Colonic mucosa (tissue), 4 donors: ENCODE measurements at regions of chr9 and their contacts with region 1.

Region 1: GRCh38 chr9:21812946-21813568 is 10.6 kb downstream of the MTAP start:
- DNase-seq: peak; percentile 80
- H3K4me3 ChIP-seq: no peak overlapping the region
- H3K27ac ChIP-seq: no peak overlapping the region
- H3K4me1 ChIP-seq: no peaks in the 10 kb centered on the region
- H3K27me3 ChIP-seq: no peaks in the 10 kb centered on the region
- CTCF ChIP-seq: peak; percentile 86

Region 2: GRCh38 chr9:21267485-21268346 is 545.3 kb before region 1 on chr9:
- intact Hi-C with region 1: no loop called
- DNase-seq: no peak
- H3K4me3 ChIP-seq: no peak overlapping the region
- H3K27ac ChIP-seq: no peak overlapping the region
- H3K4me1 ChIP-seq: no peaks in the 10 kb centered on the region
- H3K27me3 ChIP-seq: no peaks in the 10 kb centered on the region
- CTCF ChIP-seq: no peak

Region 3: DNA sequence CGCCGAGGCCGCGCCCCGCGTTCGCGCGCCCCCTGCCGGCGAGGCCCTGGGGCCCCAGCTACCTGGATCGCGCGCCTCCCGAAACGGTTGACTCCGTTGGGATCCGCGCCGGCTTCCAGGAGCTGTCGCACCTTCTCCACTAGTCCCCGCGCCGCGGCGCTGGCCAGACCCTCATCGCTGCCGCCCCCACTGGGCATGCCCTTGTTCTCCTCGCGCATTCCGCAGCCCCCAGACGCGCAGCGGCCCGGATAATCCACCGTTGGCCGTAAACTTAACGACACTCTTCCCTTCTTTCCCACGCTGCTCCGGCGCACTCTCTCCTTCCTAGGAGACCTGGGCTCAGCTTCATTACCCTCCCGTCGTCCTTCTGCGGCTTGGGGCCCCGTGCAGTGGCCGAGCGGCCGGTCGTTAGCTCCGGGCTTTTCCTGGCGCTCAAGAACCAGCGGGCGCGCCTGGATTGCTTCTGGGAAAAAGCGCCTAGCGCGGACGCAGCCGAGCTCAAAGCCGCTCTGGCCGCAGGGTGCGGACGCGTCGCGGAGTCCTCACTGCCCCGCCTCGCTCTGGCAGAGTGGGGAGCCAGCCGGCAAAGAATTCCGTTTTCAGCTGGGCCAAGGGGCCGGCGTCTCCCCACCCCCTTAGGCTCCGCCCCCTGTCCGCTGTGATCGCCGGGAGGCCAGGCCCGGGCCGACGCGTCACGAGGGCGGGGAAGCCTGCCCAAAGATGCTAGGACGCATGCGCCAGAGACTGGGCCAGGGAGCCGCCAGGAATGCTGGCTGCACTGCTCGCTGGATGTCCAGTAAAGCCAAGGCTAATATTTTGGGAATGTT is 195.9 kb after region 1 on chr9 and contains the start of gene CDKN2B:
- intact Hi-C with region 1: loop called (anchors 10 kb)
- DNase-seq: peak; percentile 98
- H3K4me3 ChIP-seq: peak within 1 kb of the TSS; percentile 57
- H3K27ac ChIP-seq: peak within 1 kb of the TSS; percentile 88
- H3K4me1 ChIP-seq: no peaks in the 10 kb centered on the region
- H3K27me3 ChIP-seq: peaks cover 18% of the 10 kb centered on the region
- CTCF ChIP-seq: peak; percentile 98
- total RNA-seq, gene CDKN2B: 57.0 to 76.6 TPM

Region 4: DNA sequence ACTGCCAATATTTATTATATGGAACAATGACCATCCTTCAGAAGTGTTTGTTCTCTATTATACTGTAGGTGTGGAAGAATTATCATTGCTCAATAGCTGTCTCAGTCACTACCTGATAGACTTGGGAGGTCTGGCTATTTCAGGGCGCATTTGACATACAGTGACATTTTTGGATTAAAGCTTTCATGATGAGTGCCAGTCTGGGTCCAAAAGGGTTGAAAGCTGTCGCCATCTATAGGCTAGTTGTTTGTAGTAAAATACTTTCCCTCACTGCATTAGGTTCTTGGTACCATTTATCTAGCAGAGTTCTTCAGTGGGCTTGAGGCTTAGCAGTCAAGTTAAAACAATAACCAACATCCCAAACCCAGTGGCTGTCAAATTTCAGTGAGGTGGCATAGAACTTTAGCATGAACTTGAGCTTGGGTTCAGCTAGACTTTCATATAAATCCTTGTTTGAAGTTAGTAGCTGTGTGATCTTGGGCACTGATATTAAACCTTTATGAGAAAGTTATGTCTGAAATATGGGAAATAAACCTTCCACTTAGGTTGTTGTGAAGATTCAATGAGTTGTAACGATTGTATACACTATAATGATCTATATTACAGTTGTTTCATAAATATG is 306.6 kb after region 1 on chr9:
- intact Hi-C with region 1: loop called (anchors 5 kb)
- DNase-seq: no peak
- H3K4me3 ChIP-seq: no peak overlapping the region
- H3K27ac ChIP-seq: peak overlapping the region; percentile 71
- H3K4me1 ChIP-seq: no peaks in the 10 kb centered on the region
- H3K27me3 ChIP-seq: no peaks in the 10 kb centered on the region
- CTCF ChIP-seq: peak; percentile 51

Region 5: DNA sequence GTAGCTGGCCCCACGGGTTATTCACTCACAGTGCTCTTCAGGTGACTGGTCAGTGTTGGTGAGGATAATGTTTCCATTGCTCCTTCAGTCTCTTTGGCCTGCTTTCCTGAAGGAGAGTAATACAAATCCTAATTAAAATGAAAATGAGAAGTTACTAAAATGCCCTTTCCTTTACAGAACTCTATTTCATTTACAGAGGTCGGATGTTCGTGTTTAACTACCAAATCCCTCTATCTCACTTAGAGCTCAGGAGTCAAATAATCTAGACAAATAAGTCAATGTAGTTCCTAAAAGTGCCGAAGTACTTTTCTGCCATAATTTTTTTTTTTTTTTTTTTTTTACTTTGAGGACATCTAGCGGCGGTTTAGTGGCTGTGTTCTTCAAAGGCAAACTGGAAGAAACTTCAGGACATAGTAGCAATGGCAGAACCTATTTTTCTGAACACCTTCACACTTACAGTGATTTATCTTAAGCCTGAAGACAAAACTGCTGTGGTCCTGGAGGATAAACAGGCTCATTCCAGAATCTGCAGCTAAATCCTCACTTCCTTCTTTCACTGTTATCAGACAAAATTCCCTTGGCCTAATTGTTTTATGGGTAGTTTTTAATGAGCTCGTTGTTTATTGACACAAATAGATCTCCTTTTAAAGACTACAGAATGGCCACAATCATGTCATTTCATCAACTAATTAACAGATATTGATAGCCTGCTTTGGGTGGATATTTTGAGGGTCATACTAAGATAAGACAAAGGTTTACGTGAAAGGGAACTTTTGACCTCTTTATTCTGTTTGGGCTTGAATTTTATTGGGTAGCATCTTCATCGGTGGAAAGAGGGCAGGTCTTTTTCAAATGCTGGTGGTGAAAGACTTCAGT is 426.0 kb after region 1 on chr9:
- intact Hi-C with region 1: loop called (anchors 2 kb)
- DNase-seq: no peak
- H3K4me3 ChIP-seq: no peak overlapping the region
- H3K27ac ChIP-seq: no peak overlapping the region
- H3K4me1 ChIP-seq: no peaks in the 10 kb centered on the region
- H3K27me3 ChIP-seq: no peaks in the 10 kb centered on the region
- CTCF ChIP-seq: peak; percentile 52

Region 6: DNA sequence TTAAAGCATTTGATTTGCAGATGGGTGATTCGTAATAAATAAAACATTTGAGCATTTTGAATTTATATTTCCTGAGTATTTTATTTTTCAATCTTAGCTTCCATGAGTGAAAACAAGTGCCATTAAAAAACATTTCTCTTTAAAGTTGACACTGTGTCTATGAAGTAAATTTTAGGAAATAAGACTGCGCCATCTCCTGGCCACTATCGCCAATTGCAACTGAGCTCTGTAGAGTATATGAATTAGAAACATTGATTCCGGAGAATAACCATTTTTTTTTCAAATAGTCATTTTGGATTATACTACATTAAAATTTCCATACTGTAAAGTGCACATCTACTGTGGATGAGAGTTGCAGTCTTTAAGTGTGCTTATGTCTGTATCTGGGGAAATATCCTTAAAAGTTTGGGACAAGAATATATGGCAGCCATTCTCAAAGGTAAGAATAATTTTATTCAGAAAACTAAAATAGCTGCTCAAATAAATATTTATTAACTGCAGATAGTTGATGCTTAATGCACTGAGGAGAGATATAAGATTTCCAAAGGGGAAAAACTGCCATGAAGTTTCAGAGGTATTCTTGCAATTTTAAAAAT is 639.5 kb after region 1 on chr9:
- intact Hi-C with region 1: loop called (anchors 5 kb)
- DNase-seq: peak; percentile 48
- H3K4me3 ChIP-seq: no peak overlapping the region
- H3K27ac ChIP-seq: no peak overlapping the region
- H3K4me1 ChIP-seq: no peaks in the 10 kb centered on the region
- H3K27me3 ChIP-seq: no peaks in the 10 kb centered on the region
- CTCF ChIP-seq: peak; percentile 83